Left cardiac atrium (tissue), 4 donors: ENCODE measurements at regions of chr5 and their contacts with region 1.

Region 1: GRCh38 chr5:98735806-98736507 is 37.5 kb upstream of the RGMB start:
- DNase-seq: no peak
- ATAC-seq: peak in 1 of 2 donors; percentile 53

Region 2: GRCh38 chr5:98570661-98571191 is 165.2 kb before region 1 on chr5:
- intact Hi-C with region 1: loop called in 1 of 2 experiments (anchors 10 kb)
- DNase-seq: no peak
- ATAC-seq: no peak